ENCODE measurements at regions of chr21 and their contacts with region 1.

Region 1: DNA sequence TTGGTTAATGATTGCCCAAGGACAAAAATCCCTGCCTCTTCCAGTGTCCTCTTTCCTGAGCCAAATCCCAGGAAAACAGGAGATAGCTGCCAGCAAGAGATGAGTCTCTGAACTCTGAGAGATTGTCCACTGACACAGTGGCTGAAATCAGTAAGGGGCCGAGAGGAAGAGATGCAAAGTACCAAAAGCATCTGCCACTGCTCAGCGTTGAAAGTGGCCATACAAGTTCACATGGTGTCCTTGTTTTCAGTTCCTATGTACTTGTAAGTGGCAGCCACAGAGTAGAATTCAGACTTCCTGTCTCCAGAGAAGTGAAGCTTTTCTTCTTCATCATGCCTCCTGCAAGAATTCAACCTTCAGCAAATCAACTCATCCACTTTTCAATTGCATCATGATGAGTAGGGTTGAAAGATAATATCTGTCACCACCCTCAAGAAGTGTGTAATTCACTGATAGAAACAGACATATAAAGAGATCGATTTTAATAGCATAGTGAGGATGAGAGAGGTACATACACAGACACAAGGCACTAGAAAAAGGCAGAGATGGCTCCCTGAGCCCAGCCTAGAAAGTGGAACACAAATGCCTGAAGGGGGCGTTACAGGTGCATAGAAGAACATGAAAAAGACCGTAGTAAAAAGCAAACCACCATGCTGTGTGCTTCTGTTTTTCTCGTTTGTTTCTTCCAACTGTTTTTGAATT is 185.8 kb downstream of the MRPL39 start:
- DNase-seq: peak; percentile 13
- H3K4me3 Mint-ChIP-seq: no peak overlapping the region
- H3K27ac Mint-ChIP-seq: no peak overlapping the region
- H3K4me1 Mint-ChIP-seq: no peaks in the 10 kb centered on the region
- H3K27me3 Mint-ChIP-seq: no peaks in the 10 kb centered on the region
- CTCF ChIP-seq: no peak

Region 2: GRCh38 chr21:25561668-25562641 is 140.5 kb after region 1 on chr21:
- CTCF ChIA-PET with region 1: interaction called, 5 read pairs
- intact Hi-C with region 1: loop called (anchors 5 kb)
- DNase-seq: peak; percentile 48
- H3K4me3 Mint-ChIP-seq: peak overlapping the region; percentile 64
- H3K27ac Mint-ChIP-seq: peak overlapping the region; percentile 51
- H3K4me1 Mint-ChIP-seq: no peaks in the 10 kb centered on the region
- H3K27me3 Mint-ChIP-seq: no peaks in the 10 kb centered on the region
- CTCF ChIP-seq: no peak

Region 3: GRCh38 chr21:25708467-25709065 is 287.1 kb after region 1 on chr21:
- CTCF ChIA-PET with region 1: no interaction called
- intact Hi-C with region 1: loop called (anchors 10 kb)
- DNase-seq: peak; percentile 2
- H3K4me3 Mint-ChIP-seq: no peak overlapping the region
- H3K27ac Mint-ChIP-seq: no peak overlapping the region
- H3K4me1 Mint-ChIP-seq: no peaks in the 10 kb centered on the region
- H3K27me3 Mint-ChIP-seq: no peaks in the 10 kb centered on the region
- CTCF ChIP-seq: peak; percentile 47

Measured in Calu3 (cell line).